MCF 10A (cell line): ENCODE measurements at regions of chr4 and their contacts with region 1.

Region 1: GRCh38 chr4:73729534-73730165 is 10.7 kb upstream of the CXCL8 start:
- DNase-seq: peak; percentile 81
- H3K4me3 Mint-ChIP-seq: no peak overlapping the region
- H3K27ac Mint-ChIP-seq: no peak overlapping the region
- H3K4me1 Mint-ChIP-seq: peaks cover 42% of the 10 kb centered on the region
- H3K27me3 Mint-ChIP-seq: no peaks in the 10 kb centered on the region
- CTCF ChIP-seq: peak; percentile 72

Region 2: GRCh38 chr4:73593631-73594241 is 135.9 kb before region 1 on chr4:
- CTCF ChIA-PET with region 1: no interaction called
- POLR2A ChIA-PET with region 1: no interaction called
- intact Hi-C with region 1: no loop called
- DNase-seq: peak; percentile 51
- H3K4me3 Mint-ChIP-seq: no peak overlapping the region
- H3K27ac Mint-ChIP-seq: no peak overlapping the region
- H3K4me1 Mint-ChIP-seq: peaks cover 18% of the 10 kb centered on the region
- H3K27me3 Mint-ChIP-seq: no peaks in the 10 kb centered on the region
- CTCF ChIP-seq: peak; percentile 38

Region 3: DNA sequence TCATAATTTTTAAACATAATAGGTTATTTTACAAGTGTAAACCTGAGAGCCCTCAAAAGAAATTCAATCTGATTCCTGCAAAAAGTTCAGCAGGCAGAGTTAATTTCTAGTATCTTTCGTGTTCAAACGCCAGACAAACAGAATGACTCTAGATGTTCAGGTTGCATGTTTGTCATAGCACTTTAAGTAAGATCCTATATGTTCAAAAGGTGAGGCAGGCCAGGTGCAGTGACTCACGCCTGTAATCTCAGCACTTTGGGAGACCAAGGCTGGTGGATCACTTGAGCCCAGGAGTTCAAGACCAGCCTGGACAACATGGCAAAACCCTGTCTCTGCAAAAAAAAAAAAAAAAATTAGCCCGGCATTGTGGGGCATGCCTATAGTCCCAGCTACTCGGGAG is 108.3 kb before region 1 on chr4:
- CTCF ChIA-PET with region 1: no interaction called
- POLR2A ChIA-PET with region 1: no interaction called
- intact Hi-C with region 1: no loop called
- DNase-seq: no peak
- H3K4me3 Mint-ChIP-seq: no peak overlapping the region
- H3K27ac Mint-ChIP-seq: no peak overlapping the region
- H3K4me1 Mint-ChIP-seq: peaks cover 19% of the 10 kb centered on the region
- H3K27me3 Mint-ChIP-seq: no peaks in the 10 kb centered on the region
- CTCF ChIP-seq: no peak

Region 4: GRCh38 chr4:73676861-73677323 is 52.8 kb before region 1 on chr4:
- CTCF ChIA-PET with region 1: interaction called, 10 read pairs
- POLR2A ChIA-PET with region 1: no interaction called
- intact Hi-C with region 1: no loop called
- DNase-seq: peak; percentile 93
- H3K4me3 Mint-ChIP-seq: no peak overlapping the region
- H3K27ac Mint-ChIP-seq: peak overlapping the region; percentile 39
- H3K4me1 Mint-ChIP-seq: peaks cover 28% of the 10 kb centered on the region
- H3K27me3 Mint-ChIP-seq: no peaks in the 10 kb centered on the region
- CTCF ChIP-seq: no peak

Region 5: DNA sequence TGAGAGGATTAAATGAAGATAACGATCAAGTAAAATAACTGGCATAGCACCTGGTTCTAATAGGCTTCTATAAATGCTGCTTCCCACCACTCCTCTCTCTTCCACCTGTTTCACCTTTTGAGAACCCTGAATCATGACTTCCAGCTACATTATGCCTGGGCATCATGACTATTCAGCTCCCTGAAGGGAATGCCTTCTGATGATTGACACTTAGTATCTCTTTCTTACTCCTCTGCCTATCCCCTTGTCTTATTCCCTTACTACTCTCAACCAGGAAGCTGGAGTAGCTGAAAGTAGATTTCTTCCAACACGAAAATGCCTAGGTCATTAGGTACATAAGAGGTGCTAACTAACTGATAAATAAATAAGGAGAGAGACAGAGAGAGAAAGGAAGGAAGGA is 14.0 kb before region 1 on chr4:
- CTCF ChIA-PET with region 1: interaction called, 15 read pairs
- POLR2A ChIA-PET with region 1: interaction called, 8 read pairs
- intact Hi-C with region 1: no loop called
- DNase-seq: no peak
- H3K4me3 Mint-ChIP-seq: no peak overlapping the region
- H3K27ac Mint-ChIP-seq: no peak overlapping the region
- H3K4me1 Mint-ChIP-seq: peaks cover 37% of the 10 kb centered on the region
- H3K27me3 Mint-ChIP-seq: no peaks in the 10 kb centered on the region
- CTCF ChIP-seq: no peak

Region 6: GRCh38 chr4:73853246-73853704 is 123.6 kb after region 1 on chr4 and contains the start of gene PF4V1:
- CTCF ChIA-PET with region 1: interaction called, 13 read pairs
- POLR2A ChIA-PET with region 1: interaction called, 5 read pairs
- intact Hi-C with region 1: no loop called
- DNase-seq: no peak
- H3K4me3 Mint-ChIP-seq: no peak within 1 kb of the TSS
- H3K27ac Mint-ChIP-seq: no peak within 1 kb of the TSS
- H3K4me1 Mint-ChIP-seq: peaks cover 9% of the 10 kb centered on the region
- H3K27me3 Mint-ChIP-seq: no peaks in the 10 kb centered on the region
- CTCF ChIP-seq: no peak
- total RNA-seq, gene PF4V1: not detected in 2 replicates

Region 7: GRCh38 chr4:73869130-73870050 is 139.7 kb after region 1 on chr4 and contains the start of gene CXCL1:
- CTCF ChIA-PET with region 1: interaction called, 72 read pairs
- POLR2A ChIA-PET with region 1: interaction called, 6 read pairs
- intact Hi-C with region 1: loop called (anchors 1 kb)
- DNase-seq: peak; percentile 74
- H3K4me3 Mint-ChIP-seq: peak within 1 kb of the TSS; percentile 95
- H3K27ac Mint-ChIP-seq: peak within 1 kb of the TSS; percentile 92
- H3K4me1 Mint-ChIP-seq: peaks cover 37% of the 10 kb centered on the region
- H3K27me3 Mint-ChIP-seq: no peaks in the 10 kb centered on the region
- CTCF ChIP-seq: no peak
- total RNA-seq, gene CXCL1: 35.0 and 49.3 TPM in 2 replicates

Region 8: GRCh38 chr4:74244049-74244448 is 514.4 kb after region 1 on chr4:
- CTCF ChIA-PET with region 1: no interaction called
- POLR2A ChIA-PET with region 1: no interaction called
- intact Hi-C with region 1: no loop called
- DNase-seq: no peak
- H3K4me3 Mint-ChIP-seq: no peak overlapping the region
- H3K27ac Mint-ChIP-seq: no peak overlapping the region
- H3K4me1 Mint-ChIP-seq: no peaks in the 10 kb centered on the region
- H3K27me3 Mint-ChIP-seq: no peaks in the 10 kb centered on the region
- CTCF ChIP-seq: no peak